Activated CD8-positive, alpha-beta T cell treated with anti-CD3 and anti-CD28 coated beads for 36 hours (primary cell): ENCODE measurements at regions of chr11 and their contacts with region 1.

Region 1: DNA sequence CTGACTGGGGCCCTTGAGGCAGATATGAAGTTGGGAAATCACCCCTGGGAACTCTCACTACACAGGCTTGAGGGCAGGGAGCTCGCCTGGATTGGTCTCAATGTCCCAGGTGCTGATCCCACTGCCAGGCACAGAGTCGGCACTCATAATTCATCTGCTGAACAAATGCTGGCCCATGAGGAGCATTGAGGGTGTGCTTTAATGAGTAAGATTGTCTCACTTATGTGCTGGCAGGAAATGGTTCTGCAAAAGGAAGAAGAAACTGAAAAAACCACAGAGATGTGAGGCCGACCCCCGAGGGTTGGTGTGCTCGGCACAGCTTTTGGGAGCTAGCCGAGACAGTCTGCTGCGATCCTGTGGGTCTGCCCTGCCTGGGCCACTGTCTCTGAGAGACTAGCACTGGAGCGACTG is 9.4 kb downstream of the PLAAT2 start:
- DNase-seq: peak; percentile 78
- ATAC-seq: peak; percentile 82
- H3K4me3 Mint-ChIP-seq: peak overlapping the region; percentile 64
- H3K27ac Mint-ChIP-seq: peak overlapping the region; percentile 98
- H3K4me1 Mint-ChIP-seq: peaks cover 50% of the 10 kb centered on the region
- H3K27me3 Mint-ChIP-seq: no peaks in the 10 kb centered on the region
- CTCF ChIP-seq: no peak

Region 2: DNA sequence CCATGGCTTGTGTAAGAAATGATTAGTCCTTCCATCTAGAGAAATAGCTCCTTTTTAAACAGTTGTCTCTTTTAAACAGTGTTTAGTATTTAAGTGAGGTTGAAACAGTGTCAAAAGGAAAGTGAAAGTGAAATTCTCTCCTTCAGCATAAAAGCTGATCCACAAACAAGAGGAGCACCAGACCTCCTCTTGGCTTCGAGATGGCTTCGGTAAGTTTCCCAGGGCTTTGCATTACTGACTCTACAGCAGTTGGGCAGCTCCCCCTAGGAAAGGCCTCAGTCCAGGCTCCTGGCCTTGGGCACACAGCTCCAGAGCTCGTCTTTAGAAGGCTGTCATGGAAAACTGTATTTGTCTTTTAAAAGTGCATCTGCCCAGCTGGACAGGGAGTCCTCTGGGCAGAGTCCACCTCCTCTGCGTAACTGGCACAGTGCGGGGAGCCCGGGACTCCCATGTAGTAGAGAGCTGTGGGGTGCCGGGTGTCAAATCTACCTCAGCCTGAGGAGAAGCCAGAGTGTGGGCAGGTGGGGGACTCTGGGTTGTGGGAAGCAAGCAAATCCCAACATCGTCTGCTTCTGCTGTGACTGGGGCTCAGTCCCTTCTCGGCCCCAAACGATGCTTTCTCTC is 17.0 kb before region 1 on chr11 and contains the start of gene PLAAT4:
- CTCF ChIA-PET with region 1: interaction called, 7 read pairs
- POLR2A ChIA-PET with region 1: interaction called, 107 read pairs
- intact Hi-C with region 1: no loop called
- DNase-seq: no peak
- ATAC-seq: peak; percentile 46
- H3K4me3 Mint-ChIP-seq: peak within 1 kb of the TSS; percentile 80
- H3K27ac Mint-ChIP-seq: peak within 1 kb of the TSS; percentile 87
- H3K4me1 Mint-ChIP-seq: peaks cover 76% of the 10 kb centered on the region
- H3K27me3 Mint-ChIP-seq: no peaks in the 10 kb centered on the region
- CTCF ChIP-seq: no peak
- total RNA-seq, gene PLAAT4: 24.1 to 26.2 TPM

Region 3: GRCh38 chr11:63543711-63544110 is 10.0 kb before region 1 on chr11:
- CTCF ChIA-PET with region 1: interaction called, 4 read pairs
- POLR2A ChIA-PET with region 1: interaction called, 107 read pairs
- intact Hi-C with region 1: no loop called
- DNase-seq: no peak
- ATAC-seq: no peak
- H3K4me3 Mint-ChIP-seq: no peak overlapping the region
- H3K27ac Mint-ChIP-seq: no peak overlapping the region
- H3K4me1 Mint-ChIP-seq: peaks cover 26% of the 10 kb centered on the region
- H3K27me3 Mint-ChIP-seq: no peaks in the 10 kb centered on the region
- CTCF ChIP-seq: no peak

Region 4: GRCh38 chr11:63567044-63567840 is 13.5 kb after region 1 on chr11:
- CTCF ChIA-PET with region 1: interaction called, 25 read pairs
- POLR2A ChIA-PET with region 1: interaction called, 13 read pairs
- intact Hi-C with region 1: no loop called
- DNase-seq: peak; percentile 75
- ATAC-seq: peak; percentile 84
- H3K4me3 Mint-ChIP-seq: peak overlapping the region; percentile 42
- H3K27ac Mint-ChIP-seq: peak overlapping the region; percentile 86
- H3K4me1 Mint-ChIP-seq: peaks cover 40% of the 10 kb centered on the region
- H3K27me3 Mint-ChIP-seq: no peaks in the 10 kb centered on the region
- CTCF ChIP-seq: no peak